Tibial artery (tissue), 4 donors: ENCODE measurements at regions of chr12 and their contacts with region 1.

Region 1: DNA sequence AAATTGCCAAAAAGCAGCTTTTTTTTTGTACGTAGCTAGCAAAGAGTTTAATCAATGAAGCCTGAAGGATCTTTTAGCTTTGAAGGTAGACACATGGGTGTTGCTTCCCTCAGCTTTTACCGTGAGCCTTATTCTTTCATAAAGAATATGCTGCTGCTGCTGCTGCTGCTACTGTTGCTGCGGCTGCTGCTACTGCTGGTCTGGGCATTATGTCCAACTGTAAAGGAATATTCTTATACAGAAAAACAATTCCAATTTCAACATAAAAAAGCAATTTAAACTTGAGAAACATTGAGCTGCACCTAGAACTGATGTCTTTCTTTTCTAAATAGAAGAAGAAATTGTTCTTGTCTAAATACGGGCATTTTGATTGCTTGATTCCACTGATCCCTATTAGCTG is 38.9 kb upstream of the PPP1R12A start:
- DNase-seq: no peak
- H3K4me3 ChIP-seq: no peak overlapping the region
- H3K27ac ChIP-seq: no peak overlapping the region
- H3K4me1 ChIP-seq: peaks cover 0 to 20% (median 3%) of the 10 kb centered on the region in 4 donors
- H3K27me3 ChIP-seq: no peaks in the 10 kb centered on the region
- CTCF ChIP-seq: no peak

Region 2: GRCh38 chr12:79688376-79689060 is 285.3 kb before region 1 on chr12:
- intact Hi-C with region 1: no loop called
- DNase-seq: no peak
- H3K4me3 ChIP-seq: peak overlapping the region; percentile 93 to 97
- H3K27ac ChIP-seq: peak overlapping the region; percentile 98
- H3K4me1 ChIP-seq: peaks cover 0 to 46% (median 15%) of the 10 kb centered on the region in 4 donors
- H3K27me3 ChIP-seq: no peaks in the 10 kb centered on the region
- CTCF ChIP-seq: no peak

Region 3: GRCh38 chr12:79920421-79921238 is 53.2 kb before region 1 on chr12:
- intact Hi-C with region 1: no loop called
- DNase-seq: no peak
- H3K4me3 ChIP-seq: no peak overlapping the region
- H3K27ac ChIP-seq: peak overlapping the region in 1 of 2 donors; percentile 52
- H3K4me1 ChIP-seq: peaks cover 0 to 99% (median 31%) of the 10 kb centered on the region in 4 donors
- H3K27me3 ChIP-seq: no peaks in the 10 kb centered on the region
- CTCF ChIP-seq: no peak

Region 4: DNA sequence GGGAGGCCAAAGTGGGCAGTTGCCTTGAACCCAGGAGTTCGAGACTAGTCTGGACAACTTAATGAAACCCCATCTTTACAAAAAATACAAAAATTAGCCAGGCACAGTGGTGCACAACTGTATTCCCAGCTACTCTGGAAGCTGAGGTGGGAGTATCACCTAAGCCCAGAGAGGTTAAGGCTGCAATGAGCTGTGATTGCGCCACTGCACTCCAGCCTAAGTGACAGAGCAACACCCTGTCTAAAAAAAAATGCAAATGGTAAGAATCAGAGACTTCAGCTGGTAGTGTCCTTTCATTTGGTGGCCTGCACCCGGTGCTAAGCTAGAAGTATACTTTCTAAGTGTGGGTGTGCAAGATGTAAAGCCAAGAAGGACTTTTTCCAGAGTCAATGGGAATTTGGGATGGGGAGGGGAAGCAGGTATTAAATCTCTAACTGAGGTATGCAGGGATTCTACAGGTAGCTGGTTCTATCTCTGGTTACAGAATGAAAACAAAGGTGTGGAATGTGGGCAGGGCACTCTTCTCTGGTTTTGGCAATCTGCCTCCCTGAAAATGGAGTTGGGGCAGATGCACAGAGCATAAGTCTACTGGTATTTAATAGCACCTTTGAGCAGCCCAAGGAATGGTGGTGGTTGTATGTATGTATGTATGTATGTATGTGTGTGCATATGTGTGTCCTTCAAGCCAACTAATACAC is 27.6 kb after region 1 on chr12:
- intact Hi-C with region 1: loop called (anchors 5 kb)
- DNase-seq: no peak
- H3K4me3 ChIP-seq: no peak overlapping the region
- H3K27ac ChIP-seq: no peak overlapping the region
- H3K4me1 ChIP-seq: peaks cover 0 to 29% (median 5%) of the 10 kb centered on the region in 4 donors
- H3K27me3 ChIP-seq: no peaks in the 10 kb centered on the region
- CTCF ChIP-seq: no peak